ENCODE measurements at regions of chr1 and their contacts with region 1.

Region 1: DNA sequence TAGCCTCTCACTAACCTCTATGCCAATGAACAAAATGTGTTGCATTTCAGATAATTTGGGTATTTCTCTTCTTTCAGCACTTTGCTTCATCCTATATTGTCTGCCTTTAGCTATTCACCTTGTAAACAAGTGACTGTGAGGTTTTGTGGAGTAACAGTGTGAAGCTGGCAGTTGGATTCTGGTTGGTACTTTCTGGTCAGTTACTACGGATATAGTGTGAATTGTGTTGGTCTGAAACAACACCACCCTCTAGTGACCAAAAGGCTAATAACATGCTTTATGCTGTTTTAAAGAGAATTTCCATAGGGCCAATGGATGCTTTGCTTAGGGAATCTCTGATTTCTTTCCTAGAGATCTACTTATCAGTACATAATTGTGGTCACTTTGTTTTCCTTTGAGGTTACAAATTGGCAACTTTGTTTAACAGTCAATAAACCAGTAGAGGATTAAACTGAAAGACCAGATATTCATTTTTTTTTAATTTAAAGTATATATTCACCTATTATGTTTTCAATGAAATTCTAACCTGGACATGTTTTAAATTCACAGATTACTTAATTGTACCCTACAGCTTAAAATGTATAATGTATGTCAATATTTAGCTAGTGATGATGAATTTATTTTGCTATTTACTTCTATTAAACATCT is 2.5 kb upstream of the PTGER3 start:
- DNase-seq: peak; percentile 26
- H3K4me3 ChIP-seq: no peak overlapping the region
- CTCF ChIP-seq: peak; percentile 43

Region 2: DNA sequence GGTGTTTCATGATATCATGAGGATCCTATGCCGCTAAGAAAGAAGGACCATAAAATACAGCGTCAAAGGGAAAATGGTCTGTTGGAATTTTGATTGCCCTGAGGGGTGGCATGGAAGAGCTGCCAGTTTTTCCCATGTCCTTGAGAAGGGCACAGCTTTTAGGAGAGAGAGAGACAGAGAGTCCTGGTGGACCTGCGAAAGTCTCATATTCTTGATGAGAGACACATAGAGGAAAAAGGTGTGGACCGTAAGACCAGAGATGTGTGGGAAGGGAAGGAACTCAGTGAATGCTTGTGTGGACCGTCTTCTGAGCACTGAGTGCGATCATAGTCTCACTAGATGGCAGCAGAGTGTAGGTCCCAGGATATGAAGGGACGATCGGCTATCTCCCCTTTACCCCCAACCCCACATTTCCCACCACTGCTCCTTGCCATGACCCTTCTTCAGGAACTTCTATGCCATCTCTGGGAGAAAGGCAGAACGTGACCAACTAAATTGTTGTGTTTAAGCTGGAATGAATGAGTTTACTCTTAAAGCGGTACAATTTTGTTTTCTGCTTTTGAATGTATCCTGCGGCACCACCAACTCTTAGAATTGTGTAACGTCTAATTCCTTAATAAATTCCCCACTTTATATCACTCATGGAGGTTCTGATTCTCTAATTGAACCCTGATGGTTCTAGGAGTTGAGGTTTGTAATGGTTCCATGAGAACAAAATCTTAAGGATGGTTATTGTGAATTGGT is 521.3 kb before region 1 on chr1:
- CTCF ChIA-PET with region 1: interaction called, 106 read pairs
- POLR2A ChIA-PET with region 1: no interaction called
- DNase-seq: no peak
- H3K4me3 ChIP-seq: no peak overlapping the region
- CTCF ChIP-seq: peak; percentile 78

Region 3: DNA sequence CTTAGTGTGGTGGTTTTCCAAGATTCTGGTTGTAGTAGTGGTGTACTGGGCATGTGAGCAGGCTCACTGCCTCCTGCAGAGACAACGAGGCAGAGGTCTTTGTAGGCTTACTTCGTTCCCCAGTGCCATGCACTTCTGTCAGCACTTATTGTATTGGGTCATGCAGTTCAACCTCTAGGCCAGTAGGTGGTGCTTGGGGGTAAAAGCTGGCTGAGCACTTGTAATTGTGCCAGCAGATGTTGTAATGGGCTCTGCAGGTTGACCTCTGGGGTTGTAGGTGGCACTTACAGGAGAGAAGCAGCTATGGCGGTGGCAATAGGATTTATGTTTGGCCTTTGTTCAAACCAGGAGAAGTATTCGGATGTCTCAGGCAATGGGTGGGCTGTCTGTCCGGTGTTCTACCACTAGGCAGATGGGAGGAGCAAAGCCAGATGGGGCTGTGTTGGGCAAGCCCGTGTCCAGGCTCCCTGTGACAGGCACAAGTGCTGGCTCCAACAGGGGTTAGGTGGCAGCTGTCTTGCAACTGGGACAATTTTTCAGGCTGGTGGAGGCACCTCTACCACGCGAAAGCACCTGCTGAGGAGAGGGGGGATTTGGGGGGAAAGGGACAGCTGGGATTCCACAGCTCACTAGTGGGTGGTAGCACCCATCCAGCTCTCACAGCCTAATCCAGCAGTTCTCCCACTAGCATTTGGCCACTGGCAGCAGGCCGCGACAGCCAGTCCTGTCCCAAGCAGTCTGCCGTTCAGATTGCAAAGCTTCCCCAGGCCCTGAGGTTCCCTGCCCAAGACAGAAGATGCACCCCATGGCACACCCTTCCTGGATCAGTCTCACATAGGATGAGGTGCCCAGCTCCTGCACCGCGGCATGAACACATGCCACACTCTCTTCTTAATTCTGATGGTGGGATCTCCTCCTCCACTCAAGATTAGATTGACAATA is 364.5 kb before region 1 on chr1:
- CTCF ChIA-PET with region 1: interaction called, 79 read pairs
- POLR2A ChIA-PET with region 1: no interaction called
- DNase-seq: peak; percentile 5
- H3K4me3 ChIP-seq: no peak overlapping the region
- CTCF ChIP-seq: peak; percentile 81

Region 4: GRCh38 chr1:70745199-70745598 is 304.9 kb before region 1 on chr1:
- CTCF ChIA-PET with region 1: interaction called, 11 read pairs
- POLR2A ChIA-PET with region 1: no interaction called
- DNase-seq: no peak
- H3K4me3 ChIP-seq: no peak overlapping the region
- CTCF ChIP-seq: peak; percentile 47

Region 5: DNA sequence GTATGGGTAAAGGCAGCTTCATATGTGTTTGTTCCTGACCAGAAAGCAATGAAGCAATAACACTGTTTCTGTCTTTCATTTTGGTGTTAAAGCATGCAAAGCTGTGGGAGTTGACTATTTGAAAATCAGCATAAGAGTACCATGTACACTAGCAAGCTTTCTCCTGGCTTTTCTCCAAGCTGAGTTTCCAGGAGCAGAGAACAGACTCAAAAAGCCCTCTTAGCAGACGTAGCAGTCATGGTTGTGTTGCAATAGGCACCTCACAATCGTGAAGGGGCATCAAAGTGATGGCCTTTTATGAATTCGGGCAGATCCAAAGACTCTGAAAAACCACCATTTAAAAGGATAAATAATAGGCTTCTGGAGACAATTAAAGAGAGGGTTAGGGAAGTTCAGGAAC is 162.1 kb before region 1 on chr1:
- CTCF ChIA-PET with region 1: no interaction called
- POLR2A ChIA-PET with region 1: no interaction called
- DNase-seq: no peak
- H3K4me3 ChIP-seq: no peak overlapping the region
- CTCF ChIP-seq: no peak

Region 6: GRCh38 chr1:71089536-71090270 is 39.6 kb after region 1 on chr1:
- CTCF ChIA-PET with region 1: no interaction called
- POLR2A ChIA-PET with region 1: no interaction called
- DNase-seq: peak; percentile 40
- H3K4me3 ChIP-seq: no peak overlapping the region
- CTCF ChIP-seq: no peak

Region 7: DNA sequence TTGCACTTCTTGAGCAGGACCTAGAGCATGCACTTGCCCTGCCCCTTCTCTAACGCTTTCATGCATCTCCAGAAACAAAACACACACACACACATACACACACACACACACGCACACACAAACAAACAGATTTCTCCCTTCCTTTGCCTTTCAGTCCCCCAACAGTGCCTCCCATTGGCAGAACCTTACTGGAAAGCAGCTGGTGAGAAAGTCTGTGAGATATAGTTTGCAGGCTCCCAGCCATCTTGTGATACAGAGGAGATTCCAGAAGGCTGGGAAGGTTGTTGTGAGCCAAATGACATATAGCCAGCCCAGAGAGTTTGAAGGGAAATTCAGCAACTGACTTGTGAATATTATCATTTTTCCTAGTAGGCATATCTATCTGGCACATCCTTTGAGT is 66.7 kb after region 1 on chr1:
- CTCF ChIA-PET with region 1: no interaction called
- POLR2A ChIA-PET with region 1: no interaction called
- DNase-seq: no peak
- H3K4me3 ChIP-seq: no peak overlapping the region
- CTCF ChIP-seq: no peak

Measured in AG04449 (cell line).